Ascending aorta (tissue), 2 donors: ENCODE measurements at regions of chr10 and their contacts with region 1.

Region 1: DNA sequence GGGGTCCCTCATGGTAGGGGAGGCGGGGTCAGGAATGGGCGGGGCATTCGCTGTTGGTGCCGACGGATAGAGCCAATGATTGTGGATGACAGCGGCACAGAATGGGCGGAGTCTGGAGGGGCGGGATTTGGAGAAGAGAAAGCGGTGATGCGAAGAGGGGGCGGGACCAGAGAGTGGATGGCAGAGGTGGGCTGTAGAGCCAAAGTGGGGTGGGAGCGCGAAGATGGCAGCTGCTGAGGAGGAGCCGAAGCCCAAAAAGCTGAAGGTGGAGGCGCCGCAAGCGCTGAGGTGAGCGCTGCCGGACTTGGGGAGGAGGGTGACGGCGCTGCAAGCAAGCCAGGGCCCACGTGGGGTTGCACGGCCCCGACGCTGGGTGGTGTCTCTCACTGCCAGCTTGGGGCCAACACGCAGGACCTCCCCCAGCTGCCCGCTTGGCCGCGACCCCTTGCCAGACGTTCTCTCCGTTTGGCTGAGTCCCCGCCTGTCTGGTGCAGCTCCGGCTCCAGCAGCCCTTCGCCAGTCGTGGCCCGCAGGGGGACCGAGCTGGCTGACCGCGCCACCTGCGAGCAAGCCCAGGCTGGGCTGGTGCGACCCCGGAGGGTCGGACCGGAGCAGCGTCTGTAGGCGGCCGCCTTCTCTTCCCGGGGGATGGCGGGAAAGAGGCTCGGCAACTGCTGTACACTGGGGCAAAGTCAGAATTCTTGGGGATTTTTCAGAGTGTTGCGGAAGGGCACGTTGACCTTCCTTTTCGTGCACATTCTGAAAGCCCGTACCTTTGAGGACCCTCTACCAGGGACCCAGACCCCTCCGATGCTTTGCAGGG is at the start of gene ADK:
- DNase-seq: peak; percentile 98 to 100
- H3K4me3 ChIP-seq: peak within 1 kb of the TSS; percentile 82 to 96
- H3K27ac ChIP-seq: peak within 1 kb of the TSS; percentile 84
- H3K4me1 ChIP-seq: peaks cover 8 to 29% of the 10 kb centered on the region in 2 donors
- H3K27me3 ChIP-seq: no peaks in the 10 kb centered on the region
- CTCF ChIP-seq: peak; percentile 24 to 63 (median 41)
- total RNA-seq, gene ADK: 2.4 TPM

Region 2: GRCh38 chr10:72887043-72887442 is 1264.2 kb before region 1 on chr10:
- intact Hi-C with region 1: no loop called
- DNase-seq: no peak
- H3K4me3 ChIP-seq: no peak overlapping the region
- H3K27ac ChIP-seq: peak overlapping the region in 1 of 2 donors; percentile 2
- H3K4me1 ChIP-seq: no peaks in the 10 kb centered on the region
- H3K27me3 ChIP-seq: no peaks in the 10 kb centered on the region
- CTCF ChIP-seq: no peak

Region 3: DNA sequence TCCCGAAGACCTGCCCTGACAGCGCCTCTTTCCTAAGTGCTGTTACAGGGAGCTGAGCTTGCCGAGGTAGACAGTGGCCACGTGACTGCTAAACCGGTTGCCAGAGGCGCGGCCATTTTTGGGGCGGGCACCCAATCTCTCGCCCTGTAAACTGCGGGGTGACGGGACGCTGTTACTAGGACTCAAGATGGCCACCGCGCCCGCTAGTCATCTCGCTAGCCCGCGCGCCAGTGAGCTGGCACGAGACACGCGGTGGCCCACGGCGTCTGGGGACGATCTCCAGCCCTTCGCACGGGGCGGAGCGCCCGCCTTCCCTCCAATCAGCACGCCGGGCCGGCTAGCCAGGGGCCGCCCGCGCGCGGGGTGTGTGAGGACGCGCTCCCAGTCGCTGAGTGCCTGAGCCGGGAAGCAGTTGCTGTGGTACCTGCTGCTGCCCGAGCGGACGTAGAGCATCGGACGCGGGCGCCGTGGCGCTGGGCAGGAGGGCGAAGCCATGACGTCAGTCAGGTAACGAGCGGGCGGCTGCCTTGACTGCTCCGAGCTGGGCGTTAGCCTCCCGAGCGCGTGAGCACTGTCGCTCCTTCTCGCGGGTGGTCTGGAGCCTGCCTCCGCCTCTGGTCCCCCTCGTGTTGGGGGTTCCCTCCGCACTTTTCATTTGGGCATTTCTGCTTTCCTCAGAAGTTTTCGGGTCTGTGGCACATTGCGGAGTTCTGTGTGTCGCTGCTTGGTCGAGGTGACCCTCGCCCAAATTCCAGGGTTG is 25.3 kb after region 1 on chr10:
- intact Hi-C with region 1: loop called (anchors 1 kb)
- DNase-seq: peak; percentile 90 to 98
- H3K4me3 ChIP-seq: peak overlapping the region; percentile 75 to 82
- H3K27ac ChIP-seq: peak overlapping the region; percentile 87 to 88
- H3K4me1 ChIP-seq: peaks cover 0 to 11% of the 10 kb centered on the region in 2 donors
- H3K27me3 ChIP-seq: no peaks in the 10 kb centered on the region
- CTCF ChIP-seq: no peak

Region 4: GRCh38 chr10:74189999-74190421 is 38.7 kb after region 1 on chr10:
- intact Hi-C with region 1: loop called (anchors 5 kb)
- DNase-seq: no peak
- H3K4me3 ChIP-seq: peak overlapping the region in 1 of 2 donors; percentile 38
- H3K27ac ChIP-seq: peak overlapping the region; percentile 62 to 75
- H3K4me1 ChIP-seq: peaks cover 0 to 13% of the 10 kb centered on the region in 2 donors
- H3K27me3 ChIP-seq: no peaks in the 10 kb centered on the region
- CTCF ChIP-seq: no peak

Region 5: DNA sequence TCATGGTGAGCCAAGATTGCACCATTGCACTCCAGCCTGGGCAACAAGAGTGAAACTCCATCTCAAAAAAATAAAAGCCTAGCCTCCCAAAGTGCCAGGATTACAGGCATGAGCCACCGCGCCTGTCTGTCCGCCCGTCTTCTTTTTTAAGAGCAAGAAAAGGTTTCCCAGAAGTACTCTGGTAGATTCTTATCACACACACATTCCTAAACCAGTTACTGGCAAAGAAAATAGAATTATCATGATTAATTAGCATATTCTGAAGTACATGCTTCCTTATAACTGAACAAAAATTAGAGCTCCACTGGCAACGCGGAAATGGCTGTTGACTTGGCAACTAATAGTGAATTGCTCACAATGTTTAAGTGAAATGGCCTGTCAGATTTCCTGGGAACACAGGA is 86.8 kb after region 1 on chr10:
- intact Hi-C with region 1: loop called (anchors 5 kb)
- DNase-seq: no peak
- H3K4me3 ChIP-seq: peak overlapping the region in 1 of 2 donors; percentile 43
- H3K27ac ChIP-seq: peak overlapping the region; percentile 13 to 58
- H3K4me1 ChIP-seq: peaks cover 0 to 4% of the 10 kb centered on the region in 2 donors
- H3K27me3 ChIP-seq: no peaks in the 10 kb centered on the region
- CTCF ChIP-seq: no peak